Ovary (tissue), 10 donors: ENCODE measurements at regions of chr12 and their contacts with region 1.

Region 1: GRCh38 chr12:98418357-98419075 is 96.9 kb upstream of the TMPO start:
- DNase-seq: peak; percentile 78 to 94 (median 83)
- H3K4me3 ChIP-seq: no peak overlapping the region
- H3K27ac ChIP-seq: peak overlapping the region in 1 of 2 donors; percentile 44
- H3K4me1 ChIP-seq: peaks cover 20% of the 10 kb centered on the region
- H3K27me3 ChIP-seq: no peaks in the 10 kb centered on the region
- CTCF ChIP-seq: no peak
- EP300 ChIP-seq: no peak
- POLR2A ChIP-seq: no peak

Region 2: GRCh38 chr12:97886511-97887176 is 531.9 kb before region 1 on chr12:
- intact Hi-C with region 1: no loop called
- DNase-seq: no peak
- H3K4me3 ChIP-seq: no peak overlapping the region
- H3K27ac ChIP-seq: no peak overlapping the region
- H3K4me1 ChIP-seq: no peaks in the 10 kb centered on the region
- H3K27me3 ChIP-seq: no peaks in the 10 kb centered on the region
- CTCF ChIP-seq: no peak
- EP300 ChIP-seq: no peak
- POLR2A ChIP-seq: no peak

Region 3: DNA sequence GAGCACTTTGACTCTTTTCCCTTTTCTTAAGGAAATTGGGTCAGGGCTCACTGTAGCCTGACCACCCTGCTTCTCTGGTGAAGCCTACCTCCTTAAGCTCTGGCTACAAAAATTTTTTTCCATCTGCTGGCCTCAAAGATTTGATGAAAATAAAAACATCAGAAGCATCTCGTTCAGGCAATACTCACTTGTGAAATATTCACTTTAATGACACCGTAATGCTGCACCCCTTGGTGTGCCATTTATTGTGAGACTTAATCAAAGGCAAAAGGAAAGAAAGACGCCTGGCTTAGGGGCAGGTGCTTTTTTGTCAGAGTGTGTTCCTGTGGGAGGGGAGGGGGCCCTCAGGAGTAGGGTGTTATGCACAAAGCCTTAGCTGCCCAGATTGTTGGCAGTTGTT is 58.1 kb before region 1 on chr12:
- intact Hi-C with region 1: no loop called
- DNase-seq: no peak
- H3K4me3 ChIP-seq: no peak overlapping the region
- H3K27ac ChIP-seq: no peak overlapping the region
- H3K4me1 ChIP-seq: no peaks in the 10 kb centered on the region
- H3K27me3 ChIP-seq: no peaks in the 10 kb centered on the region
- CTCF ChIP-seq: no peak
- EP300 ChIP-seq: no peak
- POLR2A ChIP-seq: no peak

Region 4: DNA sequence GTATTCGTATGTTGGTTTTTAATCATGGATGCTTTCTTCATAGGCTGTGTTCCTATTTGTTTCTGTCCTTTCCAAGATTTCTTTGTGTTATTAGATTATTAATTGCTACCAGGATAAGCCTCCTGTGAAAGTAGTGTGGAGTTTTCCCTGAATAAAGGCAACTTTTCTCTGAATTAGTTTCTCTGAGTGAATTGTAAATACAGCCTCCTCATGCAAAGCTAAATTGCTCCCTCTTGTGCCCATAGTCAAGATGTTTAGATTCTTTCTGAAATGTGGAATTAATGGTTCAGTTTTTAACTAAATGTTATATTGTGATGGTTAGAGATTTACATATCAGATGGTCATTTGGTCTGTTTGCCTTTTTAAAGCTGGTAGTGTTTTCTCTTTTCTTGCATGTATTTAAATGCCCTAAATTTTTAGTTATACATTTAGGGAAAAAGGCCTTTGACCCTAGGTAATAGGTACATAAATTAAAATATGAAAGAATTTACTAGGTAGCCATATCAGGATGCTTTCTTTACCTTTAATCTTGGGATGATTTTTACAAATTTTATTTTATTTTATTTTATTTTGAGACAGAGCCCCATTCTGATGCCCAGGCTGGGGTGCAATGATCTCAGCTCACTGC is 235.5 kb after region 1 on chr12:
- intact Hi-C with region 1: loop called in 3 of 4 experiments (anchors 5 to 10 kb)
- DNase-seq: no peak
- H3K4me3 ChIP-seq: no peak overlapping the region
- H3K27ac ChIP-seq: no peak overlapping the region
- H3K4me1 ChIP-seq: no peaks in the 10 kb centered on the region
- H3K27me3 ChIP-seq: no peaks in the 10 kb centered on the region
- CTCF ChIP-seq: peak in 2 of 3 donors; percentile 37 to 58
- EP300 ChIP-seq: no peak
- POLR2A ChIP-seq: no peak